Activated CD4-positive, alpha-beta memory T cell treated with anti-CD3 and anti-CD28 coated beads for 36 hours (primary cell): ENCODE measurements at regions of chr12 and their contacts with region 1.

Region 1: DNA sequence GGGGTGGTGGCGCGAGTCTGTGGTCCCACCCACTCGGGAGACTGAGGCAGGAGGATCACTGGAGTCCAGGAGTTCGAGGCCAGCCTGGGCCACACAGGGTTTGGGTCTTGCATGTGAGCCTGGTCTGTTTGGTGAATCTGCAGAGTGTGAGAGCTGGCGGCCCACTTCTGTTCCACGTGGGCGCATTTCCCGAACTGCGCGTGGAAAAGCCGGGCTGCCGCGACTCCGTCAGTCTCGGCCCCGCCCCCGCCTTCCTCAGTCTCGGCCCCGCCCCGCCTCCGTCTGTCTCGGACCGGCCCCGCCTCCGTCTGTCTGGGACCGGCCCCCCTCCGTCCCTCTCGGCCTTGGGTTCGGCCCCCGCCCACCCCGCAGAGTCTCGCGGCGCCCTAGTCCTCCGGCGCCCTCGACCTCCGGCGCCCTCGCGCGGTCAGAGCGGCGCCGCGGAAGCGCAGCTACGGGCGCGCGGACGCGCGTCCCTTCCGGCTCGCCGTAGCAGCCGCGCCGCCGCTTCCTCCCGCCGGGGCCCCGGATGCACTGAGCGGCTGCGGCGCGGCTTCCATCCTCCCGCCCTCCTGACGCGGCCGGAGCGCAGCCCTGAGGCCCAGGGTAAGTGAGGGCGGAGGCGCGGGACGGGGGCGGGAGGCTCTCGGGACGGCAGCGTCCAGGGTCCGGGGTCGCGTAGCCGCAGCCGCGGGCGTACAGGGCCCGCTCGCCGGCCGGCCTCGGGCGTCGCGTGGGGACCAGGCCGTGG is at the start of gene EP400:
- DNase-seq: peak; percentile 95
- H3K4me3 Mint-ChIP-seq: peak within 1 kb of the TSS; percentile 91
- H3K27ac Mint-ChIP-seq: peak within 1 kb of the TSS; percentile 87
- H3K4me1 Mint-ChIP-seq: peaks cover 33% of the 10 kb centered on the region
- H3K27me3 Mint-ChIP-seq: no peaks in the 10 kb centered on the region
- total RNA-seq, gene EP400: 39.9 to 45.5 TPM

Region 2: GRCh38 chr12:131710464-131711457 is 238.8 kb before region 1 on chr12 and contains the start of gene SFSWAP:
- CTCF ChIA-PET with region 1: no interaction called
- POLR2A ChIA-PET with region 1: no interaction called
- intact Hi-C with region 1: no loop called
- DNase-seq: peak; percentile 82
- H3K4me3 Mint-ChIP-seq: peak within 1 kb of the TSS; percentile 97
- H3K27ac Mint-ChIP-seq: peak within 1 kb of the TSS; percentile 96
- H3K4me1 Mint-ChIP-seq: peaks cover 27% of the 10 kb centered on the region
- H3K27me3 Mint-ChIP-seq: no peaks in the 10 kb centered on the region
- total RNA-seq, gene SFSWAP: 42.1 to 44.3 TPM

Region 3: DNA sequence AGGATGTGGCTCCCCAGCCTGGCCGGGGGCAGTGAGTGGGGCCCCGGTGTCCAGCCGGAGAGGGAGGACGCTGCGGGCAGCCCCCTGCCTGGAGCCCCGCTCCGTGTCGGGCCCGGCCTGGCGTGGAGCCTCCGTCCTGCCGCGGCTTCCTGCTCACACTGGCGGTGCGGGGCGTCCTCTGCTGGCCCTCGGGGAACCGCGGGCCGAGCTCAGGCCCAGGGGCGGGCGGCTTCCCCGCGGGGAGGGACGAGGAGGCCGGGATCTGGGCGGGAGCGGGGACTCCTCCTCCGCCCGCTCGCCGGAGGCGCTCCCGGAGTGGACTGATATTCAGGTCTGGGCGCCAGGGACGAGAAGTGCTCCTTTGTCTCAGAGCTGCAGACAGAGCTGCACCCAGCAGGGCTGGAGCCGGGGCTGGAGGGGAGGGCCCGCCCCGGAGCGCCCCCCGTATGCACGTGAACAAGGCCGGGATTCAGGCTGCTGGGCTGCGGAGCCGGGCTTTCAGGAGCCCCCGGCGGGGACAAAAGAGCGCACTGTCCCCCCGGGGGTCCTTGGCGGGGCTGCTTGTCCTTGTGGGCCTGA is 119.2 kb before region 1 on chr12:
- CTCF ChIA-PET with region 1: no interaction called
- POLR2A ChIA-PET with region 1: no interaction called
- intact Hi-C with region 1: loop called (anchors 10 kb)
- DNase-seq: peak; percentile 68
- H3K4me3 Mint-ChIP-seq: no peak overlapping the region
- H3K27ac Mint-ChIP-seq: no peak overlapping the region
- H3K4me1 Mint-ChIP-seq: peaks cover 11% of the 10 kb centered on the region
- H3K27me3 Mint-ChIP-seq: peaks cover 52% of the 10 kb centered on the region

Region 4: GRCh38 chr12:131928711-131929580 is 20.7 kb before region 1 on chr12 and contains the start of gene PUS1:
- CTCF ChIA-PET with region 1: no interaction called
- POLR2A ChIA-PET with region 1: interaction called, 6 read pairs
- intact Hi-C with region 1: loop called (anchors 1 kb)
- DNase-seq: peak; percentile 97
- H3K4me3 Mint-ChIP-seq: peak within 1 kb of the TSS; percentile 97
- H3K27ac Mint-ChIP-seq: peak within 1 kb of the TSS; percentile 88
- H3K4me1 Mint-ChIP-seq: peaks cover 24% of the 10 kb centered on the region
- H3K27me3 Mint-ChIP-seq: no peaks in the 10 kb centered on the region
- total RNA-seq, gene PUS1: 48.6 to 53.9 TPM

Region 5: GRCh38 chr12:132083941-132084620 is 134.5 kb after region 1 on chr12:
- CTCF ChIA-PET with region 1: no interaction called
- POLR2A ChIA-PET with region 1: no interaction called
- intact Hi-C with region 1: loop called (anchors 1 kb)
- DNase-seq: peak; percentile 93
- H3K4me3 Mint-ChIP-seq: peak overlapping the region; percentile 93
- H3K27ac Mint-ChIP-seq: peak overlapping the region; percentile 84
- H3K4me1 Mint-ChIP-seq: peaks cover 29% of the 10 kb centered on the region
- H3K27me3 Mint-ChIP-seq: no peaks in the 10 kb centered on the region

Region 6: GRCh38 chr12:132275110-132275531 is 325.5 kb after region 1 on chr12:
- CTCF ChIA-PET with region 1: no interaction called
- POLR2A ChIA-PET with region 1: no interaction called
- intact Hi-C with region 1: no loop called
- DNase-seq: no peak
- H3K4me3 Mint-ChIP-seq: no peak overlapping the region
- H3K27ac Mint-ChIP-seq: no peak overlapping the region
- H3K4me1 Mint-ChIP-seq: no peaks in the 10 kb centered on the region
- H3K27me3 Mint-ChIP-seq: peaks cover 22% of the 10 kb centered on the region